ENCODE measurements at regions of chr5 and their contacts with region 1.

Region 1: GRCh38 chr5:88883059-88883835 is at the start of gene MEF2C:
- DNase-seq: peak; percentile 81 to 92
- ATAC-seq: peak; percentile 90
- H3K4me3 ChIP-seq: peak within 1 kb of the TSS; percentile 100
- H3K27ac ChIP-seq: peak within 1 kb of the TSS; percentile 73 to 99
- H3K4me1 ChIP-seq: peaks cover 0 to 1% of the 10 kb centered on the region in 2 donors
- H3K27me3 ChIP-seq: no peaks in the 10 kb centered on the region
- total RNA-seq, gene MEF2C: 137 to 186 TPM

Region 2: GRCh38 chr5:88826646-88827585 is 56.3 kb before region 1 on chr5:
- intact Hi-C with region 1: loop called in 1 of 2 experiments (anchors 1 kb)
- DNase-seq: peak in 1 of 2 donors; percentile 46
- ATAC-seq: peak; percentile 80
- H3K4me3 ChIP-seq: no peak overlapping the region
- H3K27ac ChIP-seq: peak overlapping the region; percentile 62 to 72
- H3K4me1 ChIP-seq: peaks cover 3 to 9% of the 10 kb centered on the region in 2 donors
- H3K27me3 ChIP-seq: no peaks in the 10 kb centered on the region

Region 3: DNA sequence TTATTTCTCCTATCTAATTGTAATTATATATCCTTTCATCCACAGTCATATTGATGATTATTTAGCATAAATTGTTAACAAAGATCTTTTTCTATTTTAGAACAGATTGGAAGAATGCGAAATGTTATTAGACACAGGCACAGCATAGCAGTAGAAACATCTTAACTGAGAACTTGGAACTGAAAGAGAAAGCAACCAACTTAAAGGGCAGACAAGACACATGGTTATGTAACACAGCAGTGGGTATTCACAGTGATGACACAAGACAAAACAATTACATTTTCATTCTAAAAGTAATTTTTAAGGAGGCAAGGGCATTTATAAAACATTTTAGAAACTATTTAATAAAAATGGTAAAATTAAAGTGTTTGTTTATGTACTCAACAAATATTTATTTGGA is 57.5 kb after region 1 on chr5:
- intact Hi-C with region 1: loop called in 1 of 2 experiments (anchors 5 kb)
- DNase-seq: no peak
- ATAC-seq: no peak
- H3K4me3 ChIP-seq: no peak overlapping the region
- H3K27ac ChIP-seq: no peak overlapping the region
- H3K4me1 ChIP-seq: no peaks in the 10 kb centered on the region
- H3K27me3 ChIP-seq: no peaks in the 10 kb centered on the region

Region 4: DNA sequence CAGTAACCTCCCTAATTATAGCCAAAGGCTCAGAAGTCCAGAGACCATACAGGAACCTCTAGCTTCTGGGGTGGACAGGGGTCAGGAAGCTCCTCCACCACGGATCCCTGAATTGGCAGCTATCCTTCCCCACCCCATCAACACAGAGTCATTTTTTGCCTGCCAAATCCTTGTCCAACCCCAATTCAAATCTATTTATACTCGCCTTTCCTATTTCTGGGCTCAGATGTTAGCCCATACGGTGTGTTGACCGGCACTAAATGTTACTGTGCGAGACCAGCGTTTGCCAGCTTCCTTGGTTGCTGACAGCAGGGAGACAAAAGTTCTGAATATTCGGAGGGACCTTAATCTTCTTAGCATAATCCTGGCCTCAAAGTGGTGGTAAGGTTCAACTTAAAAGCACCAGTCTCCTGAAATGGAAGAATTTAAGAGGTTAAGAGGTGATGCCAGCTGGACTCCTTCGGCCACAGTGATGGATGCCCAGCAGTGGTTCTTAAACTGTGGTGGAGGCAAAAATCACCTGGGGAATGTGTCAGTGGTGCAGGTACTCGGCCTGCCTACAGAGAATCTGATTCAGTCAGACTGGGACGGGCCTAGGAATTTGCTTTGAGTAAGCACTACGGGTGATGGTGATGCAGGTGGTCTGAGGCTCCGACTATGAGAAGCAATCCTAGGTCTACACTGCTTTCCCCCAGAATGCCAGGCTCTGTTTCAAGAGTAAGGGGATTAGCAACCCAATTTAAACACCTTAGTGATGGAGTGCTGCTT is 204.5 kb after region 1 on chr5:
- intact Hi-C with region 1: loop called (anchors 2 to 10 kb)
- DNase-seq: peak in 1 of 2 donors; percentile 58
- ATAC-seq: peak; percentile 87
- H3K4me3 ChIP-seq: no peak overlapping the region
- H3K27ac ChIP-seq: peak overlapping the region; percentile 95 to 96
- H3K4me1 ChIP-seq: peaks cover 0 to 6% of the 10 kb centered on the region in 2 donors
- H3K27me3 ChIP-seq: no peaks in the 10 kb centered on the region

Region 5: DNA sequence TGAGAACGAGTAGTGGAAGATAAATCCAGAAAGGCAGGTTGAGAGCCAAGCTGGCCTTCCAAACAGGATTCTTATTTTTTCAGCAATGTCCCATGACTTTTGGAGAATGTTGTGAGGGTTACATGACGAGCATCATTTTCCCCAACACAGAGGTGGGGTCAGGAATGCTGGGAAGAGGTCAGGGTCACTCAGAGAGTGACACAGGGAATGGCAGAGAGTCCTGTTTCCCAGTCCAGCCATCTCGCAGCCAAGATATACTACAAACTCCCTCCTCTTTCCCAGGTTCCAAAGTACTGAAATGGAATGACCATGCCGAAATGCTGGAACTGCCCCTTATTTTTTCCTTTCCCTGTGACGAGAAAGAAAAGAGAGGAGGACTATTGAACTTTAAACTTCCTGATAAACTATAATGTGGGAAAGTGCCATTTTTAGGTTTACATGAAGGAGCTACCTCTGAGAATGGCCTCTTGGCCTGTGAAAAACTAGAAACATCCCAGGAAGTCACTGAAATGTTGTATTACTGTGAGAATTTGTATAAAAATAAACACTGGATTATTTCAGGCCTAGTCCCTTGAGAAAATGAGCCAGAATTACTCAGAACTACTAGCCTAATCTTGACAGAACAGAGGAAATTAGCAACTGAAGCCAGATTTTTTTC is 1105.9 kb after region 1 on chr5:
- intact Hi-C with region 1: loop called in 1 of 2 experiments (anchors 10 kb)
- DNase-seq: peak in 1 of 2 donors; percentile 70
- ATAC-seq: peak; percentile 88
- H3K4me3 ChIP-seq: no peak overlapping the region
- H3K27ac ChIP-seq: peak overlapping the region; percentile 89 to 98
- H3K4me1 ChIP-seq: no peaks in the 10 kb centered on the region
- H3K27me3 ChIP-seq: no peaks in the 10 kb centered on the region